ENCODE measurements at regions of chr4 and their contacts with region 1.

Region 1: GRCh38 chr4:155953151-155954114 is at the start of gene CTSO:
- DNase-seq: peak; percentile 88
- H3K4me3 ChIP-seq: peak within 1 kb of the TSS; percentile 54 to 86 (median 79)
- H3K27ac ChIP-seq: peak within 1 kb of the TSS; percentile 92
- H3K4me1 ChIP-seq: peaks cover 6% of the 10 kb centered on the region
- H3K27me3 ChIP-seq: no peaks in the 10 kb centered on the region
- CTCF ChIP-seq: peak in 1 of 2 donors; percentile 58
- POLR2A ChIP-seq: peak; percentile 83
- total RNA-seq, gene CTSO: 6.7 and 7.9 TPM in 2 replicates

Region 2: GRCh38 chr4:155403886-155404285 is 549.5 kb before region 1 on chr4:
- CTCF ChIA-PET with region 1: interaction called, 80 read pairs
- POLR2A ChIA-PET with region 1: no interaction called
- dilution Hi-C with region 1: no loop called
- intact Hi-C with region 1: loop called (anchors 1 kb)
- DNase-seq: peak; percentile 67
- H3K4me3 ChIP-seq: no peak overlapping the region
- H3K27ac ChIP-seq: no peak overlapping the region
- H3K4me1 ChIP-seq: no peaks in the 10 kb centered on the region
- H3K27me3 ChIP-seq: peaks cover 2 to 4% of the 10 kb centered on the region in 2 experiments
- CTCF ChIP-seq: peak; percentile 6 to 22
- POLR2A ChIP-seq: no peak

Region 3: GRCh38 chr4:155795991-155796390 is 157.4 kb before region 1 on chr4:
- CTCF ChIA-PET with region 1: interaction called, 10 read pairs
- POLR2A ChIA-PET with region 1: no interaction called
- dilution Hi-C with region 1: no loop called
- intact Hi-C with region 1: no loop called
- DNase-seq: no peak
- H3K4me3 ChIP-seq: no peak overlapping the region
- H3K27ac ChIP-seq: no peak overlapping the region
- H3K4me1 ChIP-seq: no peaks in the 10 kb centered on the region
- H3K27me3 ChIP-seq: no peaks in the 10 kb centered on the region
- CTCF ChIP-seq: peak; percentile 18 to 36
- POLR2A ChIP-seq: no peak

Region 4: DNA sequence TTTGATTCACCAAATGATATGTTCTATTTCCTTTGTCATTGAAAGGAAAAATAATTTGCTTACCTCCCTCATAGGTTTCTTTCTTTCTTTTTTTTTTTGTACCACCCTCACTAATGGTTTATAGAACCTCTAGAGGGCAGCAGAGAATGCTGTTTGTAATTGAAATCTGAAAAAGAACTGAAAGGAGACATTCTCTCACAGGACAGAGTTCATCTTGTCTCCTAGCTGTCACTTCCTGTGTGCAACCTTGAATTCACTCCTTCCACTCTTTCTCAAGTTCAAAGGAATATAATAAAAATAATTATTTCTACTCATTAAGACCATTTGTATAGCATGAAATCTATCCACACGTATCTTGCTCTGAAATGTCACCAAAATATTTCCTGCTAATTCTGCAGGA is 143.6 kb before region 1 on chr4:
- CTCF ChIA-PET with region 1: interaction called, 32 read pairs
- POLR2A ChIA-PET with region 1: no interaction called
- dilution Hi-C with region 1: no loop called
- intact Hi-C with region 1: loop called (anchors 1 kb)
- DNase-seq: peak; percentile 58
- H3K4me3 ChIP-seq: no peak overlapping the region
- H3K27ac ChIP-seq: no peak overlapping the region
- H3K4me1 ChIP-seq: peaks cover 9% of the 10 kb centered on the region
- H3K27me3 ChIP-seq: no peaks in the 10 kb centered on the region
- CTCF ChIP-seq: peak; percentile 21 to 40
- POLR2A ChIP-seq: no peak

Measured in endothelial cell of umbilical vein (primary cell).